Natural killer cell (primary cell): ENCODE measurements at regions of chr11 and their contacts with region 1.

Region 1: GRCh38 chr11:20127671-20128527 is 32.4 kb downstream of the DBX1 start:
- DNase-seq: peak; percentile 62 to 86
- ATAC-seq: peak; percentile 66 to 81 (median 69)
- H3K4me3 ChIP-seq: no peak overlapping the region
- H3K4me3 Mint-ChIP-seq: no peak overlapping the region
- H3K27ac ChIP-seq: no peak overlapping the region
- H3K27ac Mint-ChIP-seq: no peak overlapping the region
- H3K4me1 ChIP-seq: peaks cover 10% of the 10 kb centered on the region
- H3K4me1 Mint-ChIP-seq: peaks cover 11% of the 10 kb centered on the region in 2 donors
- H3K27me3 ChIP-seq: peaks cover 11% of the 10 kb centered on the region
- H3K27me3 Mint-ChIP-seq: peaks cover 21 to 27% of the 10 kb centered on the region in 2 donors
- CTCF ChIP-seq: peak; percentile 71

Region 2: GRCh38 chr11:19938169-19938856 is 189.6 kb before region 1 on chr11:
- intact Hi-C with region 1: loop called (anchors 1 kb)
- DNase-seq: peak; percentile 27 to 50
- ATAC-seq: peak; percentile 69 to 87 (median 73)
- H3K4me3 ChIP-seq: no peak overlapping the region
- H3K4me3 Mint-ChIP-seq: no peak overlapping the region
- H3K27ac ChIP-seq: no peak overlapping the region
- H3K27ac Mint-ChIP-seq: no peak overlapping the region
- H3K4me1 ChIP-seq: peaks cover 2% of the 10 kb centered on the region
- H3K4me1 Mint-ChIP-seq: no peaks in the 10 kb centered on the region
- H3K27me3 ChIP-seq: no peaks in the 10 kb centered on the region
- H3K27me3 Mint-ChIP-seq: peaks cover 6 to 7% of the 10 kb centered on the region in 2 donors
- CTCF ChIP-seq: peak; percentile 78

Region 3: GRCh38 chr11:19951558-19952115 is 176.3 kb before region 1 on chr11:
- intact Hi-C with region 1: loop called (anchors 1 kb)
- DNase-seq: peak in 1 of 2 donors; percentile 64
- ATAC-seq: peak; percentile 64 to 82 (median 74)
- H3K4me3 ChIP-seq: no peak overlapping the region
- H3K4me3 Mint-ChIP-seq: peak overlapping the region; percentile 61
- H3K27ac ChIP-seq: no peak overlapping the region
- H3K27ac Mint-ChIP-seq: no peak overlapping the region
- H3K4me1 ChIP-seq: no peaks in the 10 kb centered on the region
- H3K4me1 Mint-ChIP-seq: peaks cover 7 to 8% of the 10 kb centered on the region in 2 donors
- H3K27me3 ChIP-seq: no peaks in the 10 kb centered on the region
- H3K27me3 Mint-ChIP-seq: peaks cover 29 to 49% of the 10 kb centered on the region in 2 donors
- CTCF ChIP-seq: peak; percentile 78

Region 4: GRCh38 chr11:20355221-20356219 is 227.6 kb after region 1 on chr11:
- intact Hi-C with region 1: loop called (anchors 2 kb)
- DNase-seq: peak in 1 of 2 donors; percentile 71
- ATAC-seq: peak; percentile 52 to 89 (median 86)
- H3K4me3 ChIP-seq: no peak overlapping the region
- H3K4me3 Mint-ChIP-seq: no peak overlapping the region
- H3K27ac ChIP-seq: no peak overlapping the region
- H3K27ac Mint-ChIP-seq: no peak overlapping the region
- H3K4me1 ChIP-seq: peaks cover 2% of the 10 kb centered on the region
- H3K4me1 Mint-ChIP-seq: peaks cover 3 to 6% of the 10 kb centered on the region in 2 donors
- H3K27me3 ChIP-seq: no peaks in the 10 kb centered on the region
- H3K27me3 Mint-ChIP-seq: peaks cover 0 to 18% of the 10 kb centered on the region in 2 donors
- CTCF ChIP-seq: peak; percentile 63

Region 5: DNA sequence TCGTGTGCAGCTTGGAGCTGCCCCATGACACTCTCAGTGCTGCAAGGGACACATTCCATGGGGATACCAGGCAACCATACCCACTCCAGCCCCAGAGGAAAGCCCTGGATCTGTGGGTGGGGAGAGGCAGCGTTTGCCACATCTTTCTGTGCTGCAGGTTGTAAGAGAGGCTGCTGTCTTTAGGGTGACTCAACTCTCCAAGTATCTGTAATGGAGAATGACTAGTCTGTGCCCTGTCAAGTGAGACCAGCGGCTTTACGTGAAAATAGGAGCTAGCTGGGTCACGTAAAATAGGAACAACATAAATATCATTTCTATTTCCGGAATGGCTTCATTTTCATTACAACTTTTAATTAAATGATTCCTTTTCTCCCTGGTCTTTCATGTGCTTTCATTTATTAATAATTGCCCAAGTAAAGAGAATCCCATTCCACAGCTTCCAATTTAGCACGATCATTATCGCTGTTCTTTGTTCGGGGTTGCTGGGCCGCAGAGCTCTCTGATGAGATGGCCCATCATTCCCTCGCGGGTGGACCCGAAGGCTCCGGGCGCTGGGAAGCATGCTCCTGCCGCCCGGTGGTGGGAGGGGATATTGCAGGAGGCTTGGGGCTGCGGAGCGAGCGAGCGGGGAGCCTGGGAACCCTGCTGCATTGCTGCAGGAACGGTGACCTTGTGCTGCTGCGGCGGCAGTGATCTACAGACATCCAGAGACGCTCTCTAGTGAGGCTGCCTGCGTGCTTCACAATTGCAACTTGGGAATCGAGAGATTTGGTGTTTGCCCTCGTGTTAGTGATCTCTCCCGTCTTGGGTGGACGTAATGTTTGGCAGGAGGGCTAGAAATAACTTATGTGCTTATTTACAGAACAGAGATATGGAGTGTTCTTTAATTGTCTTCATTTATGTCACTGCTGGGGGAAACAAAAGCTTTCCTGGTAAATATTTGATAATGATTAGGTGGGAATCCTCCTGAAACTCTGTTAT is 482.1 kb after region 1 on chr11:
- intact Hi-C with region 1: loop called (anchors 5 kb)
- DNase-seq: peak; percentile 21 to 60
- ATAC-seq: peak; percentile 61 to 84 (median 63)
- H3K4me3 ChIP-seq: no peak overlapping the region
- H3K4me3 Mint-ChIP-seq: peak overlapping the region; percentile 49
- H3K27ac ChIP-seq: no peak overlapping the region
- H3K27ac Mint-ChIP-seq: no peak overlapping the region
- H3K4me1 ChIP-seq: peaks cover 4% of the 10 kb centered on the region
- H3K4me1 Mint-ChIP-seq: peaks cover 7 to 9% of the 10 kb centered on the region in 2 donors
- H3K27me3 ChIP-seq: peaks cover 7% of the 10 kb centered on the region
- H3K27me3 Mint-ChIP-seq: peaks cover 53 to 70% of the 10 kb centered on the region in 2 donors
- CTCF ChIP-seq: peak; percentile 60